GM18951 (cell line): ENCODE measurements at regions of chr12 and their contacts with region 1.

Region 1: GRCh38 chr12:24838531-24838950 is 110.4 kb downstream of the BCAT1 start:
- POLR2A ChIP-seq: no peak

Region 2: DNA sequence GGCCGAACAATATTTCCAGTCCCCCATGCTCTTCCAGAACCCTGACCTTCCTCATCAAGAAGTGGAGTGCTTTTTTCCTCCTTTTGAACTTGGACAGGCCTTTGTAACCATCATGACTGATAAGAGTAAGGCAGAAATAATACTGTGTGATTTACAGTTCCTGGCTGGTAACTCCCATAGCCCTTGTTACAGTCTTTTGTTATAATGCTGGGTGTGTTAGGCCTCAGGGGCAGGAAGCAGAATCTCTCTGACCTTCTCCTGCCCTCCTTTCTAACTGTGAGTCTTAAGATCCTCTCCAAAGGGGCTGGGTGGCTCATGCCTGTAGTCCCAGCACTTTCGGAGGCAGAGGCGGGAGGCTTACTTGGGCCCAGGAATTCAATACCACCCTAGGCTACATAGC is 50.9 kb after region 1 on chr12:
- in situ Hi-C with region 1: loop called (anchors 5 kb)
- POLR2A ChIP-seq: no peak

Region 3: DNA sequence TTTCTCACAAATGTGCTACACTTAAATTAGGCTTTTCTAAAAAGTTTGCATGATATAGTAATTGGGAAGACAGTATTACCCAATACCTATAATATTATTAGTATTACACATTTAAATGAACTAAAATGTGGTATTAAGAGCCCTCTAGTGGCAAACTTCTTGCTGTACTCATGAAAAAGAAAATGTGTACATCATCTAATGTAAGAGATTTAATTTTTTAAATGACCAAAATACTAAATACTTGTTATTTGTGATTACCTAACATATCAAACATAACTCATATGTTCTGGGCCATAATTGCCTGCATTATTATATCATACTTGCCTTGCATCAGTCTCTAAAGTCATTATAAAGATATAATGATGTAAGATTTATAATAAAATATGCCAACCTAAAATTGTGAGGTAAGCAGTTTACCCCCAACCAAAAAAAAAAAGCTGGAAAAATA is 292.2 kb after region 1 on chr12:
- in situ Hi-C with region 1: loop called (anchors 25 kb)
- POLR2A ChIP-seq: no peak